ENCODE measurements at regions of chr2 and their contacts with region 1.

Region 1: DNA sequence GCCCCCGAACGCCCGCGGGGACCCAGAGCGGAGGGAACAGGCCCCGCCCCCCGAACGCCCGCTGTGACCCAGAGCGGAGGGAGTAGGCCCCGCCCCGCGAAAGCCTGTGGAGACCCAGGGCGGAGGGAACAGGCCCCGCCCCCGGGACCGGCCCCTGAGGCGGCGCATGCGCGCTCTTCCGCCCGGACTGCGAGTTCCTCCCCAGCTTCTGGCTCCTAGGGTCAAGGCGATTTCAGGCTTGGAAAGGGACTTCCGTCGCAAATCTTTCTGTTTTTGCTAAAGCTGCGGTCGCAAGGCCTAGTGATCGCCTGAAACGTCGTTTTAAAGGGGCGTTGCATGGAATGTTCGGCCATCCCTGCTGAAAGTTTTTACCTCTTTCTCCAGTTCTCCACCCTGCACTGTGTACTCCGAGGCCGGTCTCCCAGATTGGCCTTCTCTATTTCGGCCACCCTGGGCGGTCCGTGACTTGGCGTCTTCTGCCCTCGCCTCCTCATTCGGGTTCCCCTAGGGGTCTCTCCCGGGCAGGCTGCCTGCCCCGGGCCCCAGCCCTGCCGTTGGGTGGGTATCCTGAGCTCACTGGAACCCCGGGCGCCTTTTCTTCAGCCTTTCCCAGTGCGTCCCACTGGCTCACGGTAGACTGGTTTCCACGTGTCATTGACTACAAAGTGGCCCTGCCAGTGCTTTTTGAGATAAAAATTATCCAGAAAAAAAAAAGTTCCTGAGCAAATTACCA is 372 bp upstream of the WDSUB1 start:
- DNase-seq: peak; percentile 89 to 97 (median 94)
- ATAC-seq: peak; percentile 99
- H3K4me3 ChIP-seq: peak overlapping the region; percentile 72
- H3K4me3 Mint-ChIP-seq: peak overlapping the region; percentile 80 to 92 (median 89)
- H3K27ac ChIP-seq: peak overlapping the region; percentile 77
- H3K27ac Mint-ChIP-seq: peak overlapping the region; percentile 64 to 97 (median 85)
- H3K4me1 ChIP-seq: peaks cover 8 to 13% of the 10 kb centered on the region in 2 donors
- H3K4me1 Mint-ChIP-seq: peaks cover 15 to 36% (median 31%) of the 10 kb centered on the region in 7 donors
- H3K27me3 ChIP-seq: no peaks in the 10 kb centered on the region
- H3K27me3 Mint-ChIP-seq: no peaks in the 10 kb centered on the region

Region 2: GRCh38 chr2:158618891-158619490 is 667.9 kb before region 1 on chr2:
- CTCF ChIA-PET with region 1: no interaction called
- POLR2A ChIA-PET with region 1: no interaction called
- intact Hi-C with region 1: no loop called
- DNase-seq: no peak
- ATAC-seq: no peak
- H3K4me3 ChIP-seq: no peak overlapping the region
- H3K4me3 Mint-ChIP-seq: no peak overlapping the region
- H3K27ac ChIP-seq: no peak overlapping the region
- H3K27ac Mint-ChIP-seq: no peak overlapping the region
- H3K4me1 ChIP-seq: no peaks in the 10 kb centered on the region
- H3K4me1 Mint-ChIP-seq: peaks cover 0 to 4% (median 0%) of the 10 kb centered on the region in 7 donors
- H3K27me3 ChIP-seq: no peaks in the 10 kb centered on the region
- H3K27me3 Mint-ChIP-seq: no peaks in the 10 kb centered on the region

Region 3: GRCh38 chr2:159124441-159124911 is 162.4 kb before region 1 on chr2:
- CTCF ChIA-PET with region 1: no interaction called
- POLR2A ChIA-PET with region 1: no interaction called
- intact Hi-C with region 1: loop called in 1 of 2 experiments (anchors 2 kb)
- DNase-seq: peak in 1 of 9 donors; percentile 11
- ATAC-seq: peak; percentile 68
- H3K4me3 ChIP-seq: no peak overlapping the region
- H3K4me3 Mint-ChIP-seq: peak overlapping the region in 8 of 10 donors; percentile 3 to 63 (median 36)
- H3K27ac ChIP-seq: no peak overlapping the region
- H3K27ac Mint-ChIP-seq: peak overlapping the region; percentile 43 to 93 (median 79)
- H3K4me1 ChIP-seq: peaks cover 0 to 14% of the 10 kb centered on the region in 2 donors
- H3K4me1 Mint-ChIP-seq: peaks cover 8 to 35% (median 28%) of the 10 kb centered on the region in 7 donors
- H3K27me3 ChIP-seq: no peaks in the 10 kb centered on the region
- H3K27me3 Mint-ChIP-seq: no peaks in the 10 kb centered on the region

Region 4: GRCh38 chr2:159807183-159808031 is 520.5 kb after region 1 on chr2:
- CTCF ChIA-PET with region 1: no interaction called
- POLR2A ChIA-PET with region 1: no interaction called
- intact Hi-C with region 1: loop called in 1 of 2 experiments (anchors 10 kb)
- DNase-seq: no peak
- ATAC-seq: peak; percentile 55
- H3K4me3 ChIP-seq: no peak overlapping the region
- H3K4me3 Mint-ChIP-seq: no peak overlapping the region
- H3K27ac ChIP-seq: no peak overlapping the region
- H3K27ac Mint-ChIP-seq: no peak overlapping the region
- H3K4me1 ChIP-seq: no peaks in the 10 kb centered on the region
- H3K4me1 Mint-ChIP-seq: peaks cover 0 to 4% (median 0%) of the 10 kb centered on the region in 7 donors
- H3K27me3 ChIP-seq: no peaks in the 10 kb centered on the region
- H3K27me3 Mint-ChIP-seq: no peaks in the 10 kb centered on the region

Region 5: DNA sequence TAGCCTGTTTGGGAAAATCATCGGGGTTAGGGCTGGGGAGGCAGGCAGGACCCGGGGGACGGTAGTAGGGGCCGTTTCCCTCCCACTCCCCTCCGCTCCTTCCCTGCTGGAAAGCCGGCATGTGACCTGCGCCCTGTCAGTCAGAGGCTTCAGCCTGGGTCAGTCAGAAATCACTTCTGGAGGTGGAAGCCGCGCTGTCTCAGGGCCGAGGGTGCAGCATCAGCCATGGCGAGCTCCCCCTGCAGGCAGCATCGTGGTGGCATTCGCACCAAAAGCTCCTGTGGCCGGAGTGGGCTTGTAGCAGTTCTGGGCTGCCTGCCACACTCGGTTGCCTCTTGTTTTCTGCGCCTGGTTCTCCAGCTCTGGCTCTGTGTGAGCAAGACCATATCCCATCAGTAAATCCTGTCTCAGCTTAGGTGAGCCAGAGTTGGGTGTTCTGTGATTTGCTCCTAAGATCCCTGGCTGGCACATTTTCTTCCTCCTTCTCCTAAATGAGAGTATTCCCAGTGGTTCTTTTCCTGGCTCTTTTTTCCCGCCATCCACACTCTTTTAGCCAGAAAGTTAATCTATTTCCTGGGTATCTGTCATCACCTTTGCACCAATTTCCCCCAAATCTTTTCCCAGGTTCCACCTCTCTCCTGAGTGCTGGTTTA is 635.0 kb after region 1 on chr2:
- CTCF ChIA-PET with region 1: no interaction called
- POLR2A ChIA-PET with region 1: no interaction called
- intact Hi-C with region 1: loop called in 1 of 2 experiments (anchors 5 kb)
- DNase-seq: peak; percentile 21 to 75 (median 56)
- ATAC-seq: peak; percentile 95
- H3K4me3 ChIP-seq: no peak overlapping the region
- H3K4me3 Mint-ChIP-seq: no peak overlapping the region
- H3K27ac ChIP-seq: no peak overlapping the region
- H3K27ac Mint-ChIP-seq: no peak overlapping the region
- H3K4me1 ChIP-seq: no peaks in the 10 kb centered on the region
- H3K4me1 Mint-ChIP-seq: peaks cover 0 to 7% (median 5%) of the 10 kb centered on the region in 7 donors
- H3K27me3 ChIP-seq: no peaks in the 10 kb centered on the region
- H3K27me3 Mint-ChIP-seq: peaks cover 3 to 38% (median 18%) of the 10 kb centered on the region in 5 donors

Region 6: DNA sequence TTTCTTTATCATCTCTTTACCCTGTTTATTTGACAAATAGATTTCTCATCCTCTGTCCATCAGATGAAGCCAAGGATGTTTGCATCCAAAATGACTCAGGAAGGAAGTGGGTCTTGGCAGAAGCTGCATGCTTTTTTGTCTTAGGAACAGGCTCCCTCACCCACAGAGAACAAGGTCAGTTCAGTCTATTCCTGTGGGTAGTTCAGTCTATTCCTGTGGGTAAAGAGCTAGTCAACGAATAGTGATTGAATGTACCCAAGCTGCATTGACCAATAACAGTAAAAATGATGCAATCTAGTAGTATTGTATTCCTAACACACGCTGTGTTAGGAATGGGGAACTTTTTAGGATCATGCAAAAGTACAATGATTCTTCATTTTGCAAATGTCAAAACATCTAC is 1582.5 kb after region 1 on chr2:
- CTCF ChIA-PET with region 1: no interaction called
- POLR2A ChIA-PET with region 1: no interaction called
- intact Hi-C with region 1: no loop called
- DNase-seq: no peak
- ATAC-seq: no peak
- H3K4me3 ChIP-seq: no peak overlapping the region
- H3K4me3 Mint-ChIP-seq: no peak overlapping the region
- H3K27ac ChIP-seq: no peak overlapping the region
- H3K27ac Mint-ChIP-seq: no peak overlapping the region
- H3K4me1 ChIP-seq: no peaks in the 10 kb centered on the region
- H3K4me1 Mint-ChIP-seq: no peaks in the 10 kb centered on the region
- H3K27me3 ChIP-seq: no peaks in the 10 kb centered on the region
- H3K27me3 Mint-ChIP-seq: peaks cover 0 to 8% (median 0%) of the 10 kb centered on the region in 5 donors

Measured in naive thymus-derived CD4-positive, alpha-beta T cell (primary cell).